Left ventricle myocardium inferior (tissue), 1 donor: ENCODE measurements at regions of chr4 and their contacts with region 1.

Region 1: DNA sequence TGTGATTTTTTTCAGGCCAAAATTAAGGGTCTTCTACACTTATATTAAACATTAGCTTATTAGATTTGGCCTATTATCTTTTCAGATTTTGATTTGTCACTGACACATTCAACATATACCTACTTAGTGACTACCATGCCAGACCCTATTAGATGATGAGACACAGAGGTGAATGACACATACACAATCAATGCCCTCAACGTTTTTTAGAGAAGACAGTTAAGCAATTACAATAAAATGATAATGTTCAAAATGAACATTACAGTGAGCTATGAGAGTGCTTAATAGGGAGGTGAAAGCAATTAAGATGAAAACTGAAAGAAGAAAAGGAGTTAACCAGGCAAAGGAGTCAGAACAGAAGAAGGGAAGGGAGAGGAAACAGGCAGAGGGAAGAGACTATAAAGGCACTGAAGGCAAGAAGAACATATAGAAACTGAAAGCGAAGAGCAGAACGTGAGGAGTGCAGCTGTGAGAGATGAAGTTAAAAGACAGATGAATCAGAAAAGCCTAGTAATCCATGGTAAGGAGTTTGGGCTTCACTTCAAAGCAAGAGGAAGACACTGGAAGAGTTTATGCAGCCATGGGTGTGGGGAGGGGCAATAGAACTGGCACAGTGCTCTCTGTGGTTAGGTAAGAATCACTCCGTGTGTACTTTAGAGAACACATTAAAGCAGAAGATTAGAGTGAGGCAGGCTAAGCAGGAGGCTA is 119.0 kb downstream of the REELD1 start:
- DNase-seq: no peak
- H3K4me3 ChIP-seq: no peak overlapping the region
- H3K27ac ChIP-seq: no peak overlapping the region
- H3K4me1 ChIP-seq: peaks cover 16% of the 10 kb centered on the region
- H3K27me3 ChIP-seq: no peaks in the 10 kb centered on the region
- CTCF ChIP-seq: no peak

Region 2: GRCh38 chr4:146095091-146095690 is 238.2 kb before region 1 on chr4:
- intact Hi-C with region 1: loop called (anchors 10 kb)
- DNase-seq: no peak
- H3K4me3 ChIP-seq: no peak overlapping the region
- H3K27ac ChIP-seq: no peak overlapping the region
- H3K4me1 ChIP-seq: no peaks in the 10 kb centered on the region
- H3K27me3 ChIP-seq: no peaks in the 10 kb centered on the region
- CTCF ChIP-seq: peak; percentile 76